ENCODE measurements at regions of chr7 and their contacts with region 1.

Region 1: DNA sequence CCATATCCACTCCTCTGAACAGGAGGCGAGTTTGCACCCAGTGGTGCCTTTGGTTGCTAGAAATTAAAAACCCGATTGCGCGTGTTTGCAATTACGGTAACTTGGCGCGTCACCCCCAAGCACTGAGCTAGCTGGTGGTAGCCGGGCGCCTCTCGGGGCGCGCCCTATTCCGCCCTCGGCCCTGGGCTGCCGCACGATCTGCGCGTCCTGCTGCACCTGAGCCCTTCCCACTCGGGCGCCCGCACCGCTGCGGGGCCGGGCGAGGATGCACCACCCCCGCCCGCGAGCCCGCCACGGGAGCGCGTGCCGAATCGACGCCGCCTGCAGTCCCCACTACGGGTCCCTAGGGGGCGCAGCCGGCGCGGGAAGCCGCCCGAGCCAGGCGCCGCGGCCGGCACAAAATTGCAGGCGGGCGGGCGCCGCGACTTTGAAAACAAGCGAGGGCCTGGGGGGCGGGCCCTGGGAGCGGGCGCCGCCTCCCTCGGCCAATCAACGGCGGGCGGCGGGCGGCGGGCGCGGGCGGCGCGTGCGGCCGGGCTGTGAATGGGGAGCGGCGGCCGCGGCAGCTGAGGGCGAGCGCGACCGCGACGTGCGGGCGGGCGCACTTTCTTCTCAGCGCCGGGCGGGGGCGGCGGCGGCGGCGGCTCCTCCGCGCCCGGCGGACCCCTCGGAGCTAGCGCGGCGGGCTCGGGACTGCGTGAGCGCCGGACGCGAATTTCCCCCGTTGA is at the start of gene SDK1:
- DNase-seq: peak; percentile 95 to 98
- ATAC-seq: peak; percentile 95
- H3K4me3 ChIP-seq: peak within 1 kb of the TSS; percentile 97 to 99
- H3K27ac ChIP-seq: peak within 1 kb of the TSS; percentile 45 to 92
- H3K4me1 ChIP-seq: peaks cover 4 to 5% of the 10 kb centered on the region in 2 donors
- H3K27me3 ChIP-seq: no peaks in the 10 kb centered on the region
- total RNA-seq, gene SDK1: 20.0 to 46.3 TPM

Region 2: DNA sequence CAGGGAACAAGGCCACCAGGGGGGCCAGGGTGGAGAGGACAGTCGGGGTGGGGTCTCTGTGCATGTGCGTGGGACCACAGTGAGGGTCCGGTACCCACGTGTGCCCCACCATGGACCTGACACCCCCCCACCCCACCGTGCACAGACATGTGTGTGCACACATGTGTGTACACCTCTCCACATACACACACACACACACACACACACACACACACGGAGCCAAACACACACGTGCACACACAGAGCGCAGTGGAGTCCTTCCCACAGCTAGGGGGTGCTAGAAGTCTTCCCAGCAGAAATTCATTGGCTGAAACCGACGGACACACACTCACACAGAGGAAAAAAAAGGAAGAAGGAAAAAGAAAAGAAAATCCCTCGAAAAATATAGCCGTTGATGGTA is 413.9 kb before region 1 on chr7:
- intact Hi-C with region 1: loop called in 1 of 2 experiments (anchors 2 kb)
- DNase-seq: no peak
- ATAC-seq: no peak
- H3K4me3 ChIP-seq: no peak overlapping the region
- H3K27ac ChIP-seq: no peak overlapping the region
- H3K4me1 ChIP-seq: no peaks in the 10 kb centered on the region
- H3K27me3 ChIP-seq: no peaks in the 10 kb centered on the region

Region 3: DNA sequence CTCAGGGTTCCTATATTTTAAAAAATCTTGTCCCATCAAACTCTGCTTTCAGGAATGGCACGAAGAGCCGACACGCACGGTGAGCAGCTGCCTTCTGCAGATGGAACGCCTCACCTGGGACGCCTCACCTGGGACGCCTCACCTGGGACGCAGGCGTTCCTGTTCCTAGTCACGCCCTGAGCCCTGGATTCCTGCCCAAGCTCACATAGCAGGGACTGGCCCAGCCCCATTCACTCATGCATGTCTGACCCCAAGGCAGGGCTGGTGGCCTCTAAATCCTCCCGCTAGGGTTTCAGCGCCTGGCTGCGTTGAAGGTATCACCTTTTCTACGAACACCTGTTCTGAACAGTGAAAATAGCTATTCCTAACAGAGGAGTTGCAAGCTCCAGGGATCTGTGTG is 306.9 kb before region 1 on chr7:
- intact Hi-C with region 1: no loop called
- DNase-seq: peak in 1 of 2 donors; percentile 19
- ATAC-seq: no peak
- H3K4me3 ChIP-seq: no peak overlapping the region
- H3K27ac ChIP-seq: no peak overlapping the region
- H3K4me1 ChIP-seq: no peaks in the 10 kb centered on the region
- H3K27me3 ChIP-seq: no peaks in the 10 kb centered on the region

Region 4: DNA sequence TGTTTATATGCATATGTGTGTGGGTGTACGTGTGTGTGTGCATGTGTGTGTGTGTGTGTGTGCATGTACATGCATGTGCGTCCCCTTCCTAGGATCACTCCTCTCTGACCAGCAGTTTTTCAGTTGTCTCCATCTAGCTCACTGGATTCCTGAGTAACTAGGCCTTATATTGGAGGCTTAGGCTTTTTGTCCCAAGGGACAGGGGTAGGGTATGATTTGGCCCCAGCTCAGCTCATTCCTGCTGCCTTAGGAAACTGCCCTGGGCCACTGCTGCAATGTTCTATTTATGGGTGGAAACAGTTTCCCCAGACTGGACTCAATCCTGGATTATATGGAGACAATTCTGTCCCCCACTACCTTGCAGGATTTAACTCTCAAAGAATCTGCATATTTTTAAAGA is 68.6 kb before region 1 on chr7:
- intact Hi-C with region 1: no loop called
- DNase-seq: peak in 1 of 2 donors; percentile 75
- ATAC-seq: peak; percentile 85
- H3K4me3 ChIP-seq: no peak overlapping the region
- H3K27ac ChIP-seq: peak overlapping the region; percentile 92 to 96
- H3K4me1 ChIP-seq: peaks cover 3% of the 10 kb centered on the region in 2 donors
- H3K27me3 ChIP-seq: no peaks in the 10 kb centered on the region

Region 5: DNA sequence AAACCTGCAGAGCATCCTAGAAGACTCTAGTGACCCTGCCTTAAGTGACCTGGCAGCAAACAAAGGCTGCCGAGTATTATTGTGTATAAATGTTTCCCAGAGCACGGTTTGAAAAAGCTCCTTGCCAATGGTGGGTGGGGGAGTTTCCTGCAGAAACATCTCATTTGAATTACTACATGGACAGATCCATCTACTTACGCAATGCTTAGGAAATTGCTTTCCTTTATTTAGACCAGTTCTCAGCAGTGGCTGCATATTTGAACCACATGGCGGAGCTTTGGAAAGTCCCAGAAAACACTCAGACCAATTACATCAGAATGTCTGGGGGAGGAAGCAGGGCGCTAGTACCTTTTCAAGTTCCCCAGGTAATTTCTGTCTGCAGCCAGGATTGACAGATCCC is 561.1 kb after region 1 on chr7:
- intact Hi-C with region 1: no loop called
- DNase-seq: peak in 1 of 2 donors; percentile 55
- ATAC-seq: peak; percentile 84
- H3K4me3 ChIP-seq: peak overlapping the region in 1 of 2 donors; percentile 15
- H3K27ac ChIP-seq: no peak overlapping the region
- H3K4me1 ChIP-seq: peaks cover 0 to 2% of the 10 kb centered on the region in 2 donors
- H3K27me3 ChIP-seq: no peaks in the 10 kb centered on the region

Measured in aorta (tissue), 5 donors.